ENCODE measurements at regions of chr13 and their contacts with region 1.

Region 1: GRCh38 chr13:44484562-44485138 is 91.5 kb downstream of the TSC22D1 start:
- DNase-seq: peak; percentile 48
- ATAC-seq: no peak
- H3K4me3 ChIP-seq: peak overlapping the region in 3 of 5 experiments; percentile 18 to 44 (median 26)
- H3K4me3 Mint-ChIP-seq: peak overlapping the region; percentile 76
- H3K27ac ChIP-seq: peak overlapping the region in 1 of 2 donors; percentile 56
- H3K27ac Mint-ChIP-seq: peak overlapping the region; percentile 63
- H3K4me1 ChIP-seq: peaks cover 10 to 11% of the 10 kb centered on the region in 2 donors
- H3K4me1 Mint-ChIP-seq: peaks cover 30% of the 10 kb centered on the region
- H3K27me3 ChIP-seq: no peaks in the 10 kb centered on the region
- H3K27me3 Mint-ChIP-seq: no peaks in the 10 kb centered on the region
- CTCF ChIP-seq: no peak

Region 2: DNA sequence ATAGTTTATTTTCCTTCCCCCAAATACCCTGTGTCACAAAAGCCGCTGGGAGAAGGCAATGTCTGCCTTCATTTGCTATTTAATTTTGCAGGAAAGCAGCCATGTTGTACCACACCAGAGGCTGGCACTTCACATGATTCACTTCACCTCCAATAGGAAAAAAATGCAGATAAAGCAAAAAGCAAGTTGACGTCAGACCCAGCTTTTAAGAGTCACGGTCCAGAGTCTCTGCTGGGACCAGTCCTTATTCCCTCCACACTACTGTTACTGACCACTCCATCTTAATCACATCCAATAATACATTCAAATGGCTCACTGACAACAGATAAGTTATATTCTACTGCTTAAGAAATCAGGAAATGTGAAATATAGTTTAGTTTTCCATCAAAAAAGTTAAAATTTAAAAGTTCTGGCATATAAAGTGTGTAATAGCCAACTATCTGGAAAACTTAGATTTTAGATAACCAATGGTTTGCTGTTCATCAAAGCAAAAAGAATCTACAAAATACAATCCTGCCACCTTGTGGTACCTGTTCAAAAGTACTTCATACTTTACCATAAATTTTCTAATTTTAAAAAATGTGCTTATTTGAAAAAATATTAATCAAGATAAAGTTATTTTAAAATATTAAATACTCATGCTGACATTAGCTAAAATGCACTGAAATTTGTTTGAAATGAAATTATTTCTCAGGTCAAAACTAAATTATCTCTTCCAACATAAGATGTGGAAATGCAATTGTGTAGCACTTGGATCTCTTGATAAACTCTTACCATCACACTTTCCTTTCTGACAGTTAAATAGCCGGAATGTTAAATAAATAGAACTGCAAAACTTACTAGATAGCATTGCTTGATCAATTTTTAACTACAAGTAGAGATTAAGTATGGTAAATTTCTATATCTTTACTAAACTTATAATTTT is 13.8 kb before region 1 on chr13:
- CTCF ChIA-PET with region 1: interaction called, 19 read pairs
- POLR2A ChIA-PET with region 1: no interaction called
- intact Hi-C with region 1: no loop called
- DNase-seq: peak; percentile 43
- ATAC-seq: no peak
- H3K4me3 ChIP-seq: no peak overlapping the region
- H3K4me3 Mint-ChIP-seq: no peak overlapping the region
- H3K27ac ChIP-seq: no peak overlapping the region
- H3K27ac Mint-ChIP-seq: no peak overlapping the region
- H3K4me1 ChIP-seq: no peaks in the 10 kb centered on the region
- H3K4me1 Mint-ChIP-seq: no peaks in the 10 kb centered on the region
- H3K27me3 ChIP-seq: no peaks in the 10 kb centered on the region
- H3K27me3 Mint-ChIP-seq: no peaks in the 10 kb centered on the region
- CTCF ChIP-seq: peak; percentile 75

Region 3: DNA sequence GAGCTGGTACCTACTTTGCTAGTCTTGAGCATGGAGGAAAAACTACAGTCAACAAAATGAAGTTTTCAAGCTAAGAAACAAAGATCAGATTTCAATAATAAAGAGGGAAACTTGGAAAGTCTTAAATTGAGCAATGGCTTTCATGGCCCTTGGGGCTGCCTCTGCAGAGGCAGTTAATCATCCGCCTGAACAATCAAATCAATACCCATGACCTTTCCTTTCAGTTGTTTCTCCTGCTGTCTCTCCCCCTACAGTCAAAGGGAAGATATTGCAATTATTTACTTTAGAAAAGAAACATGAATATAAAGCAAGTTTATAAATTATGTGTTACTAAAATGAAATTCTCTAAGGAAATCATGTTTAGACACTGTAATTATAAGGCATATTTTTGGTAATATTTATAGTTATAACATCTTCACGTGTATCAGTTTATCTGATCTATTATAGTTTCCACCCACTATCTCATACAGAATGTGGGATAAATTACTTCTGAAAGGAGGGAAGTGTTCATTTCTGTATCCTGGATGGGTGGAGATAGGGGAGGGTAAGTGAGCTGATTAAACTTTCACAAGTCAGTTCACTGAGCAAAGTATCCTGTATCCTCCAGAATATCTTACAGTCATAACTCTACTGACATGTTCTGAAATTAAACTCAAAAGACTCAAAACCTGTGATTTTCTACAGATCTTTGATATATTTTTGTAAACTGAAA is 163.9 kb after region 1 on chr13:
- CTCF ChIA-PET with region 1: interaction called, 25 read pairs
- POLR2A ChIA-PET with region 1: no interaction called
- intact Hi-C with region 1: loop called (anchors 1 kb)
- DNase-seq: no peak
- ATAC-seq: no peak
- H3K4me3 ChIP-seq: no peak overlapping the region
- H3K4me3 Mint-ChIP-seq: no peak overlapping the region
- H3K27ac ChIP-seq: no peak overlapping the region
- H3K27ac Mint-ChIP-seq: no peak overlapping the region
- H3K4me1 ChIP-seq: no peaks in the 10 kb centered on the region
- H3K4me1 Mint-ChIP-seq: no peaks in the 10 kb centered on the region
- H3K27me3 ChIP-seq: peaks cover 0 to 6% (median 0%) of the 10 kb centered on the region in 4 experiments
- H3K27me3 Mint-ChIP-seq: peaks cover 22% of the 10 kb centered on the region
- CTCF ChIP-seq: peak; percentile 53

Region 4: DNA sequence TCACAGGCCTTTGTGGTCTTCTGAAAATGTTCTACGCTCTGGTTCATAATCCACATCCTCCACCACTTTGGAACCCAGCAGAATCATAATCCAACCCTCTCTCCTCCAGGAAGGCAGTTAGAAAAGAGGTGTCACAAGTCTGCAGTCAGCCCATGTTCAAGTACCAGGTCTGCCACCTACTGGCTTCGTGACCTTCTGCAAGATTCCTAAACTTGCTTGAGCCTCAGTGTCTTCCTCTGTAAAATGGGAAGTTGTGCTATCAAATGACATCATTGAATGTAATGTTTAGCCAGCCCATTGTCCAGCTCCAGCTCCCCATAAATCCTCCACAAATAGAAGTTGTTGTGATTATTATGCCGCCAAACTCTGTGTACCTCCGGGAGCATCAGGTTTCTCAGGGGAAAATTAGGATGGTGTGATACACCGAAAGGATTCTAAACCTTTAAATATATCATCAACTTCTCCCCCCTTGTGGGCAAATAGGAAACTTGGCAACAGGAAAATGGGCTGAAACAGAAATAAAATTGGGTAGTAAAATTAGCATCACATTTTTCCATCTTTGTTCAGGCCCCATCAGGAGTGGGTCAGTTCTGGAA is 394.9 kb after region 1 on chr13:
- CTCF ChIA-PET with region 1: interaction called, 12 read pairs
- POLR2A ChIA-PET with region 1: no interaction called
- intact Hi-C with region 1: loop called (anchors 2 kb)
- DNase-seq: no peak
- ATAC-seq: no peak
- H3K4me3 ChIP-seq: no peak overlapping the region
- H3K4me3 Mint-ChIP-seq: no peak overlapping the region
- H3K27ac ChIP-seq: no peak overlapping the region
- H3K27ac Mint-ChIP-seq: no peak overlapping the region
- H3K4me1 ChIP-seq: no peaks in the 10 kb centered on the region
- H3K4me1 Mint-ChIP-seq: no peaks in the 10 kb centered on the region
- H3K27me3 ChIP-seq: no peaks in the 10 kb centered on the region
- H3K27me3 Mint-ChIP-seq: peaks cover 32% of the 10 kb centered on the region
- CTCF ChIP-seq: no peak

Region 5: DNA sequence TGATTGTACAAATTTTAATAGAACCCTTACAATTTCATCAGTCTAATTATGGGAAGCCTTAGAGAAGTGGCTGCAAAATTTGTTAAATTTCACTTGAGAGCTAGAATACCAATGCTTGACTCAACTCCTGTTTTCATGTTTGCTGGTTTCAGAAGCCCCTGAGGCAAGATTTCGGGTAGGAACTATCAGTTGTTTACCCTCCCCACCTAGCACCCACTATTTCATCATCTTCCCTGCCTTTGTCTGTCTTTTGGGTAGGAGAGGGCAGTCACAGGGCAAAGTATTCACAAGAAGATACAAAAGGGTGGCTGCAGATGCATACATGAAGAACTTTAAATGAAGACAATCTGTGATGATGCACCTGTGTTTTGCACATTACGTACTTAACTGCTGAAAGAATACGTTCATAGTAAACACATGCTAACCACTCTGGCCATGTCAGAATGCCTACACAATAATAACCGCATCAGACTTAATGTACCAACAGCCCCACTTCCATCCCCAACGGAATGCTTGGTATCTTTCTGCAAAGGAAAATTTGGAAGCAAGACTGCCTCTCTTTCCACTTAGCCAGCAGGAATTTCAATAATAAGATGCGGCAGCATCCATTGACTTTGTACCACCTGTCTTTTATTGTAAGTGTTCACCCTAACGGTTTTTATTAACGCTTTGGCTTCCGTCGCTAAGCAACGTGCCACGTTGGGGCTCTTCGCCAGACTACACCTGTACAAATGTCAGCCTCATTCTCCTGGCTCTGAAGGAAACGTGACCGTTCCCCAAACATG is 825.9 kb after region 1 on chr13:
- CTCF ChIA-PET with region 1: interaction called, 10 read pairs
- POLR2A ChIA-PET with region 1: no interaction called
- intact Hi-C with region 1: loop called (anchors 1 kb)
- DNase-seq: no peak
- ATAC-seq: no peak
- H3K4me3 ChIP-seq: peak overlapping the region in 3 of 5 experiments; percentile 53 to 69 (median 57)
- H3K4me3 Mint-ChIP-seq: peak overlapping the region; percentile 84
- H3K27ac ChIP-seq: no peak overlapping the region
- H3K27ac Mint-ChIP-seq: no peak overlapping the region
- H3K4me1 ChIP-seq: peaks cover 11 to 16% of the 10 kb centered on the region in 2 donors
- H3K4me1 Mint-ChIP-seq: peaks cover 17% of the 10 kb centered on the region
- H3K27me3 ChIP-seq: peaks cover 0 to 21% (median 13%) of the 10 kb centered on the region in 4 experiments
- H3K27me3 Mint-ChIP-seq: peaks cover 34% of the 10 kb centered on the region
- CTCF ChIP-seq: no peak

Measured in B cell (primary cell).